ENCODE measurements at regions of chr19 and their contacts with region 1.

Region 1: GRCh38 chr19:18588611-18589379 is at the start of gene REX1BD:
- DNase-seq: no peak
- ATAC-seq: peak; percentile 71
- H3K4me3 ChIP-seq: peak within 1 kb of the TSS; percentile 67 to 89
- H3K27ac ChIP-seq: peak within 1 kb of the TSS; percentile 100
- H3K4me1 ChIP-seq: peaks cover 15 to 33% of the 10 kb centered on the region in 2 experiments
- H3K27me3 ChIP-seq: no peaks in the 10 kb centered on the region
- CTCF ChIP-seq: peak; percentile 72 to 93 (median 85)
- POLR2A ChIP-seq: peak; percentile 58
- RAD21 ChIP-seq: peak; percentile 38; the same call in 1 of the 2 replicates
- total RNA-seq, gene REX1BD: 97.1 TPM

Region 2: DNA sequence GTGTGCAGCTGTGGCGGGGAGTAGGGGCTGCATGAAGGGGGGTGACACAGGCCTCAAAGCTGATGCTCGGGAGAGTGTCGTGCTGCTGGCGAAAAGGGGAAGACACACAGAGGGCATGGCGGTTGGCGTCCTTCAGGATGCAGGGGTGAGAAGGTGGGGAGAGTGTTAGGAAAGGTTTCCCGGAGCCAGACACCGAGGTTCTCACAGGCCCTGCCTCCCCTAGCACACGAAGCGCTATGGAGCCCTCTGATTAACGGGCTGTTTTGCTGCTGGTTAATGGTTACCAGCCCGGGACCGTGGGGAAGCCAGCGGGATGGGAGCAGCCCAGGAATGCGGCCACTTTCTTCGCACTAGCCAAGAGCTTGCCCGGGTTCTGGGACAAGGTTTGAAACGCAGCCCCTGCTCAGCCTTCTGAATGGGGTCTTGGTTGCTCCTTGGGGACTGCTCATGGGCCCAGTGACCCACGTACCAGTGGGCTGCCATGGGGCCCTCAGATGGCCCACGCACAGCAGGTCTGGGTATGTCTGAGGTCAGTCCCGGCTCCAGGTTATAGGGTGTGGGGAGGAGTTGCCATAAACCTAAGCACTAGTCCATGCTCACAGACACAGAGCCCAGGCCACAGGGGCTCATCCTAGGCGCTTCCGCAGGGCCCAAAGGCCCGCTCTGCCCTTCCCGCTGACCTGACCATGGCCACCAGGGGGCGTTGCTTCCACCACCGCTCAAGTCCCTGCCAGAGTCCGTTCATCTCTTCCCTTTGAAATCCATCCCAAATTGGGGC is 119.5 kb before region 1 on chr19:
- CTCF ChIA-PET with region 1: interaction called, 4 read pairs
- POLR2A ChIA-PET with region 1: no interaction called
- RAD21 ChIA-PET with region 1: no interaction called
- intact Hi-C with region 1: loop called (anchors 5 kb)
- DNase-seq: peak; percentile 32
- ATAC-seq: peak; percentile 76
- H3K4me3 ChIP-seq: no peak overlapping the region
- H3K27ac ChIP-seq: peak overlapping the region; percentile 37; the same call in 1 of the 2 replicates
- H3K4me1 ChIP-seq: peaks cover 13 to 32% of the 10 kb centered on the region in 2 experiments
- H3K27me3 ChIP-seq: no peaks in the 10 kb centered on the region
- CTCF ChIP-seq: peak; percentile 57 to 92 (median 91)
- POLR2A ChIP-seq: no peak
- RAD21 ChIP-seq: peak; percentile 53

Region 3: GRCh38 chr19:18557474-18558201 is 31.2 kb before region 1 on chr19 and contains the start of gene KXD1:
- CTCF ChIA-PET with region 1: interaction called, 3 read pairs
- POLR2A ChIA-PET with region 1: interaction called, 7 read pairs
- RAD21 ChIA-PET with region 1: no interaction called
- intact Hi-C with region 1: loop called (anchors 1 kb)
- DNase-seq: peak; percentile 99
- ATAC-seq: peak; percentile 97
- H3K4me3 ChIP-seq: peak within 1 kb of the TSS; percentile 89 to 100
- H3K27ac ChIP-seq: peak within 1 kb of the TSS; percentile 79
- H3K4me1 ChIP-seq: peaks cover 4 to 22% of the 10 kb centered on the region in 2 experiments; a peak in 3 of 4 replicates
- H3K27me3 ChIP-seq: no peaks in the 10 kb centered on the region
- CTCF ChIP-seq: no peak
- POLR2A ChIP-seq: peak; percentile 55
- RAD21 ChIP-seq: no peak
- total RNA-seq, gene KXD1: 139 TPM

Region 4: DNA sequence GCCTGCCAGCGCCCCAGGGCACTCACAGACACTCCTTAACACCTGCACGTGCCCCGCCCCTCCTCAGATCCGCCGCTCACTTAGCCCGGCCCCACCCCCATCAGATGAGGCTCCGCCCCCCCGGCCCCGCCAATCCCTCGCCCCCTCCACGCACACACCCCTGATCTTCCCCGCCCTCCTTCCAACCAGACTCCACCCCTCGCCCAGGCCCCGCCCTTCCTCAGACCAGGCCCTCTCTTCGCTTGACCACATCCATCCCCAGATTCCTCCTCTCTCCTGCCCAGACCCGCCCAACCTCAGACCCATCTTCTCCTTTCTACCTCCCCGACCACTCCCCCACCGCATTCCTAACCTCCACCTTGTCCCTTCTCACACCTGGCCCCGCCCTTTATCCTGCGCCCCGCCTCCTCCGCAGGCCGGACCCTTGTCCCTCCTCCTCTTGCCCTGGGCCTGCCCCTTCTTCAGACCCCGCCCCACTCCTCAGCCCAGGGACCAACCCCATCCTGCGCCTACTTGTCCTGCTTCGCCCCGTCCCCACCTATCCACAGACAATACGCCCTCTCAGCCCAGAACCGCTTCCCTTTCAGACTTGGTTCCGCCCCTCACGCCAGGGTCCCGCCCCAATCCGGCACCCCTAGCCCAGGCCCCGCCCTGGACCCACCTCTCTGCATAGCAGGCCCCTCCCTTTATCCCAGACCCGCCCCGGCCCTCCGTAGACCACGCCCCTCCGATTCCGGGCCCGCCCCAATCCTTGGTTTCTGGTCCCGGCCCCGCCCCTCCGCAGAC is 47.6 kb after region 1 on chr19:
- CTCF ChIA-PET with region 1: interaction called, 3 read pairs
- POLR2A ChIA-PET with region 1: interaction called, 3 read pairs
- RAD21 ChIA-PET with region 1: no interaction called
- intact Hi-C with region 1: loop called (anchors 5 kb)
- DNase-seq: peak; percentile 87
- ATAC-seq: peak; percentile 89
- H3K4me3 ChIP-seq: peak overlapping the region; percentile 92 to 98
- H3K27ac ChIP-seq: peak overlapping the region; percentile 78
- H3K4me1 ChIP-seq: peaks cover 9 to 27% of the 10 kb centered on the region in 2 experiments
- H3K27me3 ChIP-seq: no peaks in the 10 kb centered on the region
- CTCF ChIP-seq: no peak
- POLR2A ChIP-seq: no peak
- RAD21 ChIP-seq: no peak

Region 5: DNA sequence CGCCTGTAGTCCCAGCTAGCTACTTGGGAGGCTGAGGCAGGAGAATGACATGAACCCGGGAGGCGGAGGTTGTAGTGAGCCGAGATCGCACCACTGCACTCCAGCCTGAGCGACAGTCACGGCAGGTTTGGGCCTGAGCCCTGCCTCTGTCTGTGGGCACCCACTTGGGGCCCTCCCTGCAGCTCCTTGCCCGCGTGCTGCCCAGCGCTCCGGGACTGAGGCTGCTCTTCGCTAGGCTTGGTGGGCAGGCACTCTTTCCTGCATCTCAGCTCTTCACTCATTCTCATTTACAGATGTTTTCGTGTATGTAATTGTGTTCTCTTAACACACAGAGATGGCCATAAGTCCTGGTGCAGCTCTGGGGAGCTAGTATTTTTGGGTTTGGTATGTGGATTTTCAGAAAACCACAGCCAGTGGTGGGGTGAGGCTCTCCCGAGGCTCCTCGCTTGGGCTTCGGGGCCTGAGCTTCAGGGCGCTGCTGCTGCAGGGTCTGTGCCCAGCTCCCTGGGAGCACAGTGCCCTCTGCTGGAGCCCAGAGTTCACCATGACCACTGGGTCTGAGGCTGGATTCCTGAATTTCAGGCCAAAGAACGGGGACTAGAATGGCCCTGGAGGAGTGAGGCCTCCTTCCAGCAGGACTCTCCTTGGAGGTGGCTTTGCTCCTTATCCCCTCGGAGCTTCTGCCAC is 258.2 kb after region 1 on chr19:
- CTCF ChIA-PET with region 1: interaction called, 39 read pairs
- POLR2A ChIA-PET with region 1: interaction called, 3 read pairs
- RAD21 ChIA-PET with region 1: no interaction called
- intact Hi-C with region 1: loop called (anchors 2 kb)
- DNase-seq: no peak
- ATAC-seq: peak; percentile 95
- H3K4me3 ChIP-seq: no peak overlapping the region
- H3K27ac ChIP-seq: no peak overlapping the region; the same call in 1 of the 2 replicates
- H3K4me1 ChIP-seq: 0 out of 4 replicates have a peak, but pooled peaks cover 0 to 4% of the 10 kb centered on the region in 2 experiments
- H3K27me3 ChIP-seq: no peaks in the 10 kb centered on the region
- CTCF ChIP-seq: peak; percentile 74 to 90 (median 87); a peak in 5 of 6 replicates
- POLR2A ChIP-seq: no peak
- RAD21 ChIP-seq: peak; percentile 88

Region 6: DNA sequence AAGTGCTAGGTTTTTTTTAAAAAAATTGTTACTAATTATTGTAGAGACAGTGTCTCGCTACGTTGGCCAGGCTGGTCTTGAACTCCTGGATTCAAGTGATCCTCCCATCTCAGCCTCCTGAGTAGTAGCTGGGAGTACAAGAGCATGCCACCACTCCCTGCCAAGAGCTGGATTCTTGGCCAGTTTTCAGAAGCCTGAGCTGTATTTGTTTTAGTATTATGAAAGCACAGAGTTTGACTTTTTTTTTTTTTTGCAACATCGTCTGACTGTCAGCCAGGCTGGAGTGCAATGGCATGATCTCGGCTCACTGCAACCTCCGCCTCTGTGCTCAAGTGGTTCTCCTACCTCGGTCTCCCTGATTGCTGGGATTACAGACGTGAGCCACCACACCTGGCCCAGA is 451.6 kb after region 1 on chr19:
- CTCF ChIA-PET with region 1: no interaction called
- POLR2A ChIA-PET with region 1: no interaction called
- RAD21 ChIA-PET with region 1: no interaction called
- intact Hi-C with region 1: no loop called
- DNase-seq: no peak
- ATAC-seq: no peak
- H3K4me3 ChIP-seq: no peak overlapping the region
- H3K27ac ChIP-seq: no peak overlapping the region
- H3K4me1 ChIP-seq: no peaks in the 10 kb centered on the region
- H3K27me3 ChIP-seq: no peaks in the 10 kb centered on the region
- CTCF ChIP-seq: no peak
- POLR2A ChIP-seq: no peak
- RAD21 ChIP-seq: no peak

Region 7: GRCh38 chr19:19835560-19836038 is 1246.8 kb after region 1 on chr19:
- CTCF ChIA-PET with region 1: no interaction called
- POLR2A ChIA-PET with region 1: no interaction called
- RAD21 ChIA-PET with region 1: no interaction called
- intact Hi-C with region 1: no loop called
- DNase-seq: no peak
- ATAC-seq: no peak
- H3K4me3 ChIP-seq: no peak overlapping the region
- H3K27ac ChIP-seq: no peak overlapping the region
- H3K4me1 ChIP-seq: no peaks in the 10 kb centered on the region
- H3K27me3 ChIP-seq: no peaks in the 10 kb centered on the region
- CTCF ChIP-seq: no peak
- POLR2A ChIP-seq: no peak
- RAD21 ChIP-seq: no peak